ENCODE measurements at regions of chr11 and their contacts with region 1.

Region 1: DNA sequence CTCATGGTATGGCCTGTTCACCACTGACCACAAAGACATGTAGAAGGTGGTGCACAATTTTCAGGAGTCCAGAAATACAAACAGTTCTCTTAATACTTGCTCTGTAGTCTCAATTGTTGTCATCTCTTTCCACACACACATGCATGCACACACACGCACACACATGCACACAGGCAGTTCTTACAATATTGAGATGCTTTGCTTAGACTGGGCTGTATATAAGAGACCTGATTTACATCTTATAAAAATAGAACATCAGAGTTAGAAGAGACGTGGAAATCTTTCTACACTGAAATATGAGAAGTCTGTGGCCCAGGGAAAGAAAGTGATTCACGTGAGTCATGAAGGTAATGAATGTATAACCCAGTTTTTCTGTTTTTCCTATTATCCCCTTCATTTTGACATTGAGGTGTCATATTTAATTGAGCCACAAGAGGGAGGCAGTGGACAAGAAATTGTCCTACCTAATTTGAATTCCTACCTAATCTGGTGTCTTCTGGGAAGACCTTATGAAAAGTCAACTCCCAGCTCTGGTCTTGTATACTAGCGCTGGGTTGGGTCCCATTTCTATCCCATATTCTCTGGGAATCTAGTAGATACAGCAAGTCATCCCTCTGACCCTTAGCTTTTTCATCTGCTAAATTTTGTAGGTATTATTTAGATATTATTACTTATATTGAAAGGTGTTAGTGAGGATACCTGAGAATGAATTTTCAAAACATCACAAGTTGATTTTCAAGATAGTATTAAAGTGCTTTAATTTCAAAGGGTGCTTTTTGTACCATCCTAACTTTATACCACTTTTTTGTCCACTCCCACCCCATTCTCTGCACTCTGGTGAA is 14.9 kb upstream of the MS4A4A start:
- DNase-seq: no peak
- ATAC-seq: peak; percentile 76
- H3K4me3 Mint-ChIP-seq: no peak overlapping the region
- H3K27ac Mint-ChIP-seq: no peak overlapping the region
- H3K4me1 Mint-ChIP-seq: peaks cover 11% of the 10 kb centered on the region
- H3K27me3 Mint-ChIP-seq: no peaks in the 10 kb centered on the region
- CTCF ChIP-seq: peak; percentile 65

Region 2: GRCh38 chr11:59610289-59610688 is 655.3 kb before region 1 on chr11:
- CTCF ChIA-PET with region 1: no interaction called
- POLR2A ChIA-PET with region 1: no interaction called
- intact Hi-C with region 1: no loop called
- DNase-seq: no peak
- ATAC-seq: no peak
- H3K4me3 Mint-ChIP-seq: no peak overlapping the region
- H3K27ac Mint-ChIP-seq: no peak overlapping the region
- H3K4me1 Mint-ChIP-seq: peaks cover 40% of the 10 kb centered on the region
- H3K27me3 Mint-ChIP-seq: no peaks in the 10 kb centered on the region
- CTCF ChIP-seq: no peak

Region 3: DNA sequence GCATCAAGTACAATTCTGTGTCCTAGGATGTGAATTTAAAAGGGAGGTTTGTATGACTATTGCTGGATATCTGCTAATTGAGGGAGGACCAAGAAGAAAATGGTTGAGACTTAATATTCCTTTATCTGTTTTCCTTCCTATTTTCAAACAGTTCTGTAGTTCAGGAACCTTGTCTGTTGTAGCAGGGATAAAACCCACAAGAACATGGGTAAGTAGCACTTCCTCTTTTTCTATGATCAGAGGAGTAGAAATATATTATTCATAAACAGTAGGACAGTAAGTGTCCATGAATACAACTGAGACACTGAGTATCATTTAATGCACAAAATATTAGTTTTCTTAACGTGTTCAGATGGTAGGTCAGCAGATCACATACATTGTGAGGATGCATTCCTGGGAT is 201.5 kb before region 1 on chr11:
- CTCF ChIA-PET with region 1: no interaction called
- POLR2A ChIA-PET with region 1: no interaction called
- intact Hi-C with region 1: no loop called
- DNase-seq: no peak
- ATAC-seq: no peak
- H3K4me3 Mint-ChIP-seq: no peak overlapping the region
- H3K27ac Mint-ChIP-seq: no peak overlapping the region
- H3K4me1 Mint-ChIP-seq: no peaks in the 10 kb centered on the region
- H3K27me3 Mint-ChIP-seq: peaks cover 6% of the 10 kb centered on the region
- CTCF ChIP-seq: no peak

Region 4: DNA sequence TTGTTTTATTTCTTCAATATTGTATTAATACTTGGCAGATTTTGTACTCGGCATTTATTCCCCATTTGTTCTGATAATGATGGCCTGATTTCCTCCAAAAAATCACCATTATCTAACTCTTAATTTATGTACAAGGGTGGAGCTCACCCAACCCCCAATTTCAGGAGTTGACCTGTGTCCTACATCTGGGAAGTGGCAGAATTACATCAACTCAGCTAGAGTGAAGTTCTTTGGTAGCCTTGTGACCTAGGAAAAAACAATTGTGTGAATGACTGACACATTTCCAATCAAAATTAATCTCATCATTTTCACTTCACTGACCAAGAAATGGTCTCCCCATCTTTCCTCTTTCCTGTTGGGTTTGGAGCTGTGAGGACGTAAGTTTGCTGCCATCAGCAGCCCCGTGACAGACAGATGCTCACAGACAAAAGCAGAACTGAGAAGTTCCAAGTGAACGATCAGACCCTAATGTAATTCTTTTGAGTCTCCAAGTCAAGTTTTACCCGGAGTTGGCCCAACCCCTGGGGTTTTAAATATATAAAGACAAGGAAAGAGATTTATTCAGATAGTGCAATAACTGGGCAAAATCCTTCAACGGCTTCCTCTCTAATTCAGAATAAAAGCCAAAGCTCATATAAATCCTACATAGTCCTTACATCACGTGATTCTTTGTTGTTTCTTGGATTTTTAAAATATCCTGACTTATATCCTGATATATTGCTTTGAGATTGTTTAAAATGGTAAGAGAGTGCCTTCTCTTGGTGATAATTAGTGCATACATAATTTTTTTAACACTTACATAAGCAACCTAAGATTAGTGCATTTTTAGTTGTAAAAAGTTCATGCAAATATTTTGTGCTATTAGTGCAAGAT is 45.0 kb after region 1 on chr11:
- CTCF ChIA-PET with region 1: interaction called, 5 read pairs
- POLR2A ChIA-PET with region 1: interaction called, 3 read pairs
- intact Hi-C with region 1: loop called (anchors 5 kb)
- DNase-seq: no peak
- ATAC-seq: peak; percentile 75
- H3K4me3 Mint-ChIP-seq: peak overlapping the region; percentile 58
- H3K27ac Mint-ChIP-seq: peak overlapping the region; percentile 91
- H3K4me1 Mint-ChIP-seq: peaks cover 49% of the 10 kb centered on the region
- H3K27me3 Mint-ChIP-seq: no peaks in the 10 kb centered on the region
- CTCF ChIP-seq: no peak

Region 5: DNA sequence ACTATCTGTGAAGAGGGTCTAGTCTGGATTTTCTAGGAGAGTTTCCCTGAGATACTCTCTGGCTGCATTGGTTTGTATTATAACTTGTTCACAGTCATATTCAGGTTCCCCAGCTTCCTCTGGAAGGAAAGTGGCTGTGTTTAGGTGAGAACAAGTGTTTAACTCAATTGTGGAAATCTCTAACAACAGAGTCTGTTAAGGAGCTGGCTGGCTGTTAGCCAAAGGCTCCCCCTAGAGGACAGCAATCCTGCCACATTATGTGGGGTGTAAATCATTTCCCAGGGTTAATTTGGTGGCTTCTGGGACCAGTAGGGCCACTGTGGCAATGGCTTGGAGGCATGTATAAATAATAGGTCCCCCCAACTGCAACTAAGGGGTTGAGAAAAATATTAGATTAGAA is 79.9 kb after region 1 on chr11:
- CTCF ChIA-PET with region 1: interaction called, 125 read pairs
- POLR2A ChIA-PET with region 1: interaction called, 3 read pairs
- intact Hi-C with region 1: loop called (anchors 1 kb)
- DNase-seq: no peak
- ATAC-seq: peak; percentile 56
- H3K4me3 Mint-ChIP-seq: no peak overlapping the region
- H3K27ac Mint-ChIP-seq: no peak overlapping the region
- H3K4me1 Mint-ChIP-seq: peaks cover 35% of the 10 kb centered on the region
- H3K27me3 Mint-ChIP-seq: no peaks in the 10 kb centered on the region
- CTCF ChIP-seq: no peak

Region 6: GRCh38 chr11:60615497-60615896 is 349.9 kb after region 1 on chr11:
- CTCF ChIA-PET with region 1: interaction called, 23 read pairs
- POLR2A ChIA-PET with region 1: no interaction called
- intact Hi-C with region 1: loop called (anchors 1 kb)
- DNase-seq: no peak
- ATAC-seq: no peak
- H3K4me3 Mint-ChIP-seq: no peak overlapping the region
- H3K27ac Mint-ChIP-seq: no peak overlapping the region
- H3K4me1 Mint-ChIP-seq: peaks cover 10% of the 10 kb centered on the region
- H3K27me3 Mint-ChIP-seq: peaks cover 9% of the 10 kb centered on the region
- CTCF ChIP-seq: no peak

Region 7: DNA sequence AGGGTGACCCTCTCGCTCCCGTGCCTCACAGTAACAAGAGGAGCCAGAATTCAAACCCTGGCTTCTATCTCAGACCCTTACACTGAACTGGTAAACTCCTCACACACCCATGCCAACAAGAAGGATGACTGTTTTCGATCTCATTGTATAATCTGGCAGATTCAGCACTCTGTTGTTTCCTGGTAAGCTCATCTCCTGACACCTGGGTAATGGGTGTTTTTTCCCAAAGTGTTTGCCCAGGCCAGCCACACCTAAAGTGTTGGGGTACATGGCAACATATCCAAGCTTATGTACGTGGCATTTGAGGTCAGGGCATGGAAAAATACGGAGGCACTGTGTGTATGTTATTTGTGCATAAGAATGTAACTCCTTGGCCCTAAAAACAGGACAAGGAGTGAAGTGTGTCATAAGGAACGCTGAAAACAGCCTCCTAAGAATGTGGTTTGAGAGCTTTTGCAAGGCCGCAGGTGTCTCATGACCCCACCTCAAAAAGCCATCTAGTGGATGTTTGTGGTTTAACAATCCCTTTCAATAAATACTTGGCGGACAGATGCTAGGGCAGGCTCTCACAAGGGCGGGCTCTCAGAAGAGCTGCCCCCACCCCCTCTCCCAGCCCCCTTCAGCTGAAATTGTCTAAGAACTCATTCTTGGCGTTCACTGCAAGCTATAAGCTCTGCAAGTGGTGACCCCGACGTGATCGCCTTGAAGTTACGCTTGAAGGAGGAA is 490.9 kb after region 1 on chr11 and contains the start of gene MS4A15:
- CTCF ChIA-PET with region 1: interaction called, 8 read pairs
- POLR2A ChIA-PET with region 1: no interaction called
- intact Hi-C with region 1: loop called (anchors 2 kb)
- DNase-seq: no peak
- ATAC-seq: peak; percentile 50
- H3K4me3 Mint-ChIP-seq: no peak within 1 kb of the TSS
- H3K27ac Mint-ChIP-seq: no peak within 1 kb of the TSS
- H3K4me1 Mint-ChIP-seq: peaks cover 18% of the 10 kb centered on the region
- H3K27me3 Mint-ChIP-seq: peaks cover 29% of the 10 kb centered on the region
- CTCF ChIP-seq: no peak
- total RNA-seq, gene MS4A15: not detected in 2 replicates

Region 8: DNA sequence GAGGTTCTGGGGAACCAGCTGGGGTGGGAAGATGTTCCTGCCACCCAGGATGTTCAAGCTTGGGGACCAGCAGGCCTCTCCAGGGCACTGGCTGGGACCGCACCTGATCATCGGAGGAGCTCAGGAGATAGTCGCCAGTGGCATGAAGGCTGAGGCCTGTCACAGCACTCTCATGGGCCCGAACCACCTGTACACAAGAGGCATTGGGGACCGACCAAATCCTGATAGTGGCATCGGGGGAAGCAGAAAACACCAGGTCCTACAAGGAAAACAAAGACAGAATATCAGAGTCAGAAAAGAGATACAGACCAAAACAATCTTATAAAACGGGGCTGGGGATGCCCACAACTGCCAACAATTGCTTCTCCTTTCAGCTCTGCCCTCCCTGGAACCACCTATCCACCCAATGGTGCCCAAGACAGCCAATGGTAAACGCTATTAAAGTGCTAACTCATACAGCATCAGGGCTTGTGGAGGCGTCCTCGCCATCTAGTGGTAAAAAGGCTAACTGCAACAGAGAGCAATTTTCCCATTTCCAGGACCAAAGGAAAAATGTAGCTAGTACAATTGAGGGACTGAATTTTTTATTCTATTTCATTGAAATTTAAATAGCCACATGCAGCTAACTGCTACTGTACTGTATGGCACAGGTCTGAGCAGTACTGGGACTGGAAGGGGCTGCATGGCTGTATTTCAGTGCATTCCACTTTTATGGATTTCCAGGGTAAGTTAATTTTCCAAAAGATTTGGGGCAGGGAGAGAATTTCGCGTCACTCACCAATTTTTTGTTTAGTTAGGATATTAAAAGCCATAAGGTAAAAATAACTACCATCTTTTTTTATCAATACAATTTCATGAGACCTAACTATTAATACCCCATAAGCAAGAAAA is 633.7 kb after region 1 on chr11:
- CTCF ChIA-PET with region 1: interaction called, 3 read pairs
- POLR2A ChIA-PET with region 1: no interaction called
- intact Hi-C with region 1: loop called (anchors 10 kb)
- DNase-seq: no peak
- ATAC-seq: peak; percentile 90
- H3K4me3 Mint-ChIP-seq: no peak overlapping the region
- H3K27ac Mint-ChIP-seq: no peak overlapping the region
- H3K4me1 Mint-ChIP-seq: peaks cover 10% of the 10 kb centered on the region
- H3K27me3 Mint-ChIP-seq: no peaks in the 10 kb centered on the region
- CTCF ChIP-seq: peak; percentile 95

Measured in activated B cell treated with CpG ODN at 0.5 μM for 24 hours (primary cell).